PC-9 (cell line): ENCODE measurements at regions of chrX and their contacts with region 1.

Region 1: GRCh38 chrX:54248309-54248708 is 65.3 kb upstream of the FAM120C start:
- DNase-seq: peak in 1 of 2 experiments; percentile 50
- H3K4me3 ChIP-seq: no peak overlapping the region
- H3K27ac ChIP-seq: no peak overlapping the region
- H3K4me1 ChIP-seq: no peaks in the 10 kb centered on the region
- H3K27me3 ChIP-seq: no peaks in the 10 kb centered on the region; the same call in 1 of the 2 replicates
- CTCF ChIP-seq: peak; percentile 58; the same call in 1 of the 2 replicates

Region 2: DNA sequence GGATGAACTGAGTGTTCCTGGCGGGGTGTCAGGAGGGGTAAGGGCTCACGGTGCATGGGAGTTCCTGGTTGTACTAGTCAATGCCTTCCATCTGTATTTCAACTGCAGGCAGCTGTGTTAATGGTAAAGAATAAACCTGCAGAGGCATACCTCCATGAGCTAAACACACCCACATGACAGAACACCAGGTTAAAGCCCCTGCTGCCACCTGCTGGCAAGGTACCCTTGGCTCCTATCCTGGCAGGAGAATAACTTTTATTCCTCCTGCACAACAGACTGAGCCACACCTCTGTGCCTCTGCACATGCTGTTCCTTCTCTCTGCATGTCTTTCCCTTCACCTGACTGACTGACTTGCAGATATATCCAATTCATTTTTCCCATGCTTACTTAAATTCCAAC is 538.7 kb after region 1 on chrX:
- CTCF ChIA-PET with region 1: interaction called, 4 read pairs
- POLR2A ChIA-PET with region 1: no interaction called
- intact Hi-C with region 1: loop called (anchors 10 kb)
- DNase-seq: peak in 1 of 2 experiments; percentile 11
- H3K4me3 ChIP-seq: no peak overlapping the region
- H3K27ac ChIP-seq: no peak overlapping the region
- H3K4me1 ChIP-seq: no peaks in the 10 kb centered on the region
- H3K27me3 ChIP-seq: peaks cover 34% of the 10 kb centered on the region; the same call in 1 of the 2 replicates
- CTCF ChIP-seq: peak; percentile 51